PC-3 (cell line): ENCODE measurements at regions of chr20 and their contacts with region 1.

Region 1: GRCh38 chr20:55919319-55919718 is 86.0 kb downstream of the CBLN4 start:
- DNase-seq: no peak
- ATAC-seq: no peak
- H3K4me3 ChIP-seq: no peak overlapping the region
- H3K27ac ChIP-seq: no peak overlapping the region
- H3K4me1 ChIP-seq: no peaks in the 10 kb centered on the region
- H3K27me3 ChIP-seq: no peaks in the 10 kb centered on the region
- CTCF ChIP-seq: no peak

Region 2: DNA sequence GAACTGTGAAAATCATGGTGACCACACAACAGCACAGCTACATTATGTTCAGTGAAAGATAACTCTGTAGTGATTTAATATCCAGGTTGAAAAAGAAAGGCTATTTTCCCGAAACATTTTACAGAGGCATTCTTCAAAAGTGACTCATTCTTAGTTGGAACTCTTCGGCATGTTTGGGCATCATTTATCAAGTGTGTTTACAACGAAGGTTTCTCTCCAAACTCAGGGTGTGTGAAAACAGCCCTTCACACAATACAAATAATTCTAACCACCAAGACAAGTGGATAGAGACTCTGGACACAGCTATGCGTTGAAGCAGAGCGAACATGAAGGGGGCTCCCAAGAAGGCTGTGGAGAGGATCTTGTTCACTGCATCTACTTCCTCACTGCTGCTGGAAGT is 28.4 kb after region 1 on chr20:
- CTCF ChIA-PET with region 1: no interaction called
- POLR2A ChIA-PET with region 1: no interaction called
- intact Hi-C with region 1: loop called (anchors 2 kb)
- DNase-seq: peak; percentile 19
- ATAC-seq: no peak
- H3K4me3 ChIP-seq: no peak overlapping the region
- H3K27ac ChIP-seq: no peak overlapping the region
- H3K4me1 ChIP-seq: no peaks in the 10 kb centered on the region
- H3K27me3 ChIP-seq: no peaks in the 10 kb centered on the region
- CTCF ChIP-seq: no peak

Region 3: DNA sequence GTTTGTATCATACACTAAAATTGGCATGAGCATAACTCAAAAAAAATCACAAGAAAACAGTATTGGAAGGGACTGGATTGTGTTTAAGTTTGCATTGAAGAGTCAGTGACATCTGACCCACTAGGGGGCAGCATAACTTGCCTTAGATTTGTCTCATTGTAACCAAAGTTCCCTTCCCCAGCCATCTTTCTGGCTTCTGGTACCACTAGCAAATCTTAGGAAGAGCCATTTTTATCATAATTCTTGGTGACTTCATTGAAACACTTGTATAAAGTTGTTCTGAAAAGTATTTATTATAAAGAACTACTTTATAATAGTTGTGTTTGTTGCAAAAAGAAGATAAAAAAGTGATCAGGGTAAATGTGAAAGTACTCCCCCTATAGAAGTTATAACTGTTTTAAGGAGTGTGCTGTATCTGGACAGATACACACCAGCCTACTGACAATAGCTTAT is 480.8 kb after region 1 on chr20:
- CTCF ChIA-PET with region 1: no interaction called
- POLR2A ChIA-PET with region 1: no interaction called
- intact Hi-C with region 1: no loop called
- DNase-seq: peak; percentile 84
- ATAC-seq: peak; percentile 84
- H3K4me3 ChIP-seq: no peak overlapping the region
- H3K27ac ChIP-seq: no peak overlapping the region
- H3K4me1 ChIP-seq: no peaks in the 10 kb centered on the region
- H3K27me3 ChIP-seq: no peaks in the 10 kb centered on the region
- CTCF ChIP-seq: peak; percentile 95